Calu3 (cell line): ENCODE measurements at regions of chr2 and their contacts with region 1.

Region 1: DNA sequence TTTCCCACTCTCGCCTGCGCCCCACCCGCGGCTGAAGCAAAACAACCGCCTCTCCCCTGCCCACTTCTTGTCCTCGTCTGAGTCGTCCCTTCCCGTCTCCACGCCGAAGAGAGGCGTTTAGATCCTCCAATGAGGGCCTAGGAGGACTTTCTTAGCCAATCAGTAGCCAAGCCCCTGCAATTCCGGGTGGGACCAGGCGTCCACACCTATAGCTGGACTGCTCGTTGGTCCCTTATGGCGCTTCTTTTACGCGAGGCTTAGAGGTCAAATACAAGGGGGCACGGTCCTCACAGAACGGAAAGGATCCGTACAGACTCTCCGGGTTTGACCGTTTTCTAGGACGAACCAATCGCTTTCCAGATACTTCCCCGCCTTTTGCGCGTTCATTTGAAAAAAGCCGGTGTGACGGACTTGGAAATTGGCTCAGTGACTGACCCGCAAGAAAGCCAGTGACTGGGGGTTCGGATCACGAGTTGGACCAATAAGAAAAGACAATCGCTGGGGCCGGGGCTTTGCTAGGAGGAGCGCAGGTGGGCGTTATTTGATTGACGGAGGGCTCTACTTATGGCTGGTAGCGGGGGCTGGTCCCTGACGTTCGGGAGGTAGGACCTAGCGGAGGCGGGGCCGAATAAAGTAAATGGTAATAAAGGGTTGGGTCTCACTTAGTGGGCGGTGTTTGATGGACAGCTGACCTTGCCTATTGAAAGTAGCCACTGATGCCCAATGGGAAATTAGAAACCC is 565 bp upstream of the PPM1B start:
- DNase-seq: peak; percentile 97
- H3K4me3 Mint-ChIP-seq: peak overlapping the region; percentile 86
- H3K27ac Mint-ChIP-seq: peak overlapping the region; percentile 89
- H3K4me1 Mint-ChIP-seq: peaks cover 8% of the 10 kb centered on the region
- H3K27me3 Mint-ChIP-seq: no peaks in the 10 kb centered on the region
- CTCF ChIP-seq: no peak

Region 2: GRCh38 chr2:44211183-44211582 is 43.1 kb after region 1 on chr2:
- CTCF ChIA-PET with region 1: no interaction called
- intact Hi-C with region 1: loop called (anchors 5 kb)
- DNase-seq: no peak
- H3K4me3 Mint-ChIP-seq: no peak overlapping the region
- H3K27ac Mint-ChIP-seq: no peak overlapping the region
- H3K4me1 Mint-ChIP-seq: peaks cover 39% of the 10 kb centered on the region
- H3K27me3 Mint-ChIP-seq: no peaks in the 10 kb centered on the region
- CTCF ChIP-seq: no peak

Region 3: GRCh38 chr2:44233450-44234128 is 65.5 kb after region 1 on chr2:
- CTCF ChIA-PET with region 1: no interaction called
- intact Hi-C with region 1: loop called (anchors 5 kb)
- DNase-seq: no peak
- H3K4me3 Mint-ChIP-seq: no peak overlapping the region
- H3K27ac Mint-ChIP-seq: peak overlapping the region; percentile 54
- H3K4me1 Mint-ChIP-seq: no peaks in the 10 kb centered on the region
- H3K27me3 Mint-ChIP-seq: no peaks in the 10 kb centered on the region
- CTCF ChIP-seq: no peak

Region 4: DNA sequence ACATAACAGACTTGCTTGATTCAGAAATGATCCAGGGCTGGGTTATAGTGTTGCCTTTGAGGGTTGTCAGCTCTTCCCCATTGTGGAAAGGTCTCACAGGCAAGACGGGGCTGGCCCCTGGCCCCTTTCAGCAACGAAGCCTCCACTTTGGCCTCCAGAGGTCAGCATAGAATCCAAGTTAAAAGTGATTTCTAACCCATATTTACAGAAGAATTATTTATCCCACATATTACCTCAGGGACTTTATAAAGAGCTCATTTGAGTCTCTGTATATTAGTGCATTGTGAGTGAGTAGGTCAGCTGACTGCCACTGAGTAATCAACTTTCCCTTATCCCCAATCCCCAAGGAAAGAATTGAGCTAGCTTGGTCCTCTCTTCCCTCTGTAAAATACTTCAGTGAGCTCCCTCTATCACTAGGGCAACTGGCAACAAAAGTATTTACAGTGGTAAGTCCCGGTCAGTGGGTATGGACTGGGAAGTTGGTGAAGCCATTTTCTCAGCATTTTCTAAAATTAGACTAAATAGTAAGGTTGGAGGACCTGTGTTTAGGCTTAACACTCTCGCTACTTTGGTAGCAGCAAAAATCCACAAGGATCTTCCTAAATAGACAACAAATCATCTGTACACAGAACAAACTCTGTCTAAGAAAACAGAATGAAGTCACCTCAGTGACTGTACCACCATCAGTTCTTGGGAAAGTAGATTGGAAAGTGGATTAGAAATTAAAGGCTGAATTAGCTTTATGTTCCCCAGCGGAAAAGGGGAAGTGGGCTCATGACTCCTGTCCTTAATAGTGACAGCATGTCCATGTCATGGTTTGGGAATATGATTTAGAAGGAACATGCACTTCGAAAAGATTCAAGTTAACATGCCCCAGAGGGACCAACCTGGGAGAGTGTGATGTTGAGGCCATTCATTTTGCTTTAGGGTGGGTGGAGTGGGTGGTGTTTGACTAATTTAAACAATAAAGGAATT is 602.4 kb after region 1 on chr2:
- CTCF ChIA-PET with region 1: no interaction called
- intact Hi-C with region 1: no loop called
- DNase-seq: no peak
- H3K4me3 Mint-ChIP-seq: no peak overlapping the region
- H3K27ac Mint-ChIP-seq: no peak overlapping the region
- H3K4me1 Mint-ChIP-seq: no peaks in the 10 kb centered on the region
- H3K27me3 Mint-ChIP-seq: no peaks in the 10 kb centered on the region
- CTCF ChIP-seq: no peak